ENCODE measurements at regions of chr16 and their contacts with region 1.

Region 1: GRCh38 chr16:74601126-74601871 is 5.6 kb downstream of the GLG1 start:
- DNase-seq: peak; percentile 24 to 85 (median 71)
- ATAC-seq: peak; percentile 96
- H3K4me3 ChIP-seq: peak overlapping the region in 1 of 2 experiments; percentile 53
- H3K4me3 Mint-ChIP-seq: peak overlapping the region; percentile 67
- H3K27ac ChIP-seq: peak overlapping the region; percentile 71 to 75
- H3K27ac Mint-ChIP-seq: peak overlapping the region; percentile 94
- H3K4me1 ChIP-seq: peaks cover 66% of the 10 kb centered on the region
- H3K4me1 Mint-ChIP-seq: peaks cover 73% of the 10 kb centered on the region
- H3K27me3 ChIP-seq: no peaks in the 10 kb centered on the region
- H3K27me3 Mint-ChIP-seq: no peaks in the 10 kb centered on the region
- CTCF ChIP-seq: no peak

Region 2: DNA sequence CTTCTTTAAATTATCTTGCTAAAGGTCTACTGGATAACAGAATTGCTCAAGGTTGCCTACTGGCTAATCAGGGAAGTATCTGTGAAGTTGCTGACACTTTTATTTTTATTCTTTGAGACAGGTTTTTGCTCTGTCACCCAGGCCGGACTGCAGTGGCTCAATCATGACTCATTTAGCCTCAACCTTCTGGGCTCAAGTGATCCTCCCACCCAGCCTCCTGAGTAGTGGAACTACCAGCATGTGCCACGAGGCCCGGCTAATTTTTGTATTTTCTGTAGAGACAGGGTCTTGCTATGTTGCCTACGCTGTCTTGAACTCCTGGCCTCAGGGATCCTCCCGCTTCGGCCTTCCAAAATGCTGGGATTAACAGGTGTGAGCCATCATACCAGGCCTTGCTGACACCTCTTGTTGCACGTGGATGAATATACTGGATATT is 37.5 kb before region 1 on chr16:
- CTCF ChIA-PET with region 1: interaction called, 3 read pairs
- POLR2A ChIA-PET with region 1: interaction called, 3 read pairs
- intact Hi-C with region 1: loop called in 1 of 2 experiments (anchors 5 kb)
- DNase-seq: peak in 1 of 9 experiments; percentile 24
- ATAC-seq: peak; percentile 30
- H3K4me3 ChIP-seq: no peak overlapping the region
- H3K4me3 Mint-ChIP-seq: no peak overlapping the region
- H3K27ac ChIP-seq: no peak overlapping the region
- H3K27ac Mint-ChIP-seq: peak overlapping the region; percentile 41
- H3K4me1 ChIP-seq: peaks cover 57% of the 10 kb centered on the region
- H3K4me1 Mint-ChIP-seq: peaks cover 85% of the 10 kb centered on the region
- H3K27me3 ChIP-seq: no peaks in the 10 kb centered on the region
- H3K27me3 Mint-ChIP-seq: no peaks in the 10 kb centered on the region
- CTCF ChIP-seq: no peak

Region 3: DNA sequence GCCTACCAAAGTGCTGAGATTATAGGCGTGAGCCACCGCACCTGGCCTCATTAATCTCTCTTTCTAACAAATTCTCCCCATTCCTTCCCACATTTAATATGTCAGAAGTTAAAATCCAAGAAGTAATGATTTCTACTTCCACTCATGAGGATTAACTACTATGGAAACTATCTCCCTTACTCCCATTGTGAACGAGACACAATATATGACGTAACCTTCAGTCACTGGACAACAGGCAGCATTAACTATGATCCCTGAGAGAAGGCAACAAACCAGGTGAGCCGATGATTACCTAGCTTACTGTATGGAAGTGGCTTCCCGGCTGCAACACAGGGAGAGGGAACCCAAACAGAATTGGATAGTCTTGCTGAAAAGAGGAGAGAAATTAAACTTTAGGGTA is 14.4 kb before region 1 on chr16:
- CTCF ChIA-PET with region 1: interaction called, 3 read pairs
- POLR2A ChIA-PET with region 1: interaction called, 3 read pairs
- intact Hi-C with region 1: loop called in 1 of 2 experiments (anchors 2 kb)
- DNase-seq: no peak
- ATAC-seq: no peak
- H3K4me3 ChIP-seq: no peak overlapping the region
- H3K4me3 Mint-ChIP-seq: no peak overlapping the region
- H3K27ac ChIP-seq: no peak overlapping the region
- H3K27ac Mint-ChIP-seq: peak overlapping the region; percentile 52
- H3K4me1 ChIP-seq: peaks cover 36% of the 10 kb centered on the region
- H3K4me1 Mint-ChIP-seq: peaks cover 66% of the 10 kb centered on the region
- H3K27me3 ChIP-seq: no peaks in the 10 kb centered on the region
- H3K27me3 Mint-ChIP-seq: no peaks in the 10 kb centered on the region
- CTCF ChIP-seq: no peak